ENCODE measurements at regions of chr20 and their contacts with region 1.

Region 1: DNA sequence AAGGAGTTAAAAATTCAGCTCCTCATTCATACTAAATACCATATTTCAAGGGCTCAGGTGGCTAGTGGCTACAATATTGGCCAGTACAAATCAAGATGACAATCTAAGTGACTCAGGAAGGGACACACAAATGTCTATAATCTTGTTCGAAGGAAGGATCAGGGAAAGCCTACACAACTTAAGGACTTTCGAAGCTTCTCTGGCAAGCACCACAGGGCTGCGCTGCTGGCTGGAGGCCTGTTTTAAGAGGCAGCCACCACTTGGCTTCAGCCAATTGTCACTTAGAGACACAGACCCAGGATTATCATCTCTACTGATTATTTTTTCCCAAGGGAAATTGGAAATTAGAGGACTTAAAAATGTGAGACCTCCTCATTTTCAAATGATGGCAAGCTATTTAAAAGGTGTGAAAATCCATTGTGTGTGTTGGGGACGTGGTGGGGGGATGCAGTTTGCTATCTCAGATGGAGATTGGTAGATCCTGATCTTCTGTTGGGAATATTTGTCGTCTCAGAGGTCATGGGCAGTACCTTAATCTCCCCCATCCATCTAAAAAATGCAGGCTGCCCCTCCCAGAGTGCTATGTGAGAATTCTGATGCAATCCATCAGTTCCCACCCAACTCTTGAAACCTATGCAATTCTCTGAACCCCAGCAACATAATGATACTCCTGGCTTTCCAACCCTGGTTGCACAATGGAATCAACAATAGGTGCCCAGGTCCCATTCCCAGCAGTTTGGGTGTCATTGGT is 11.3 kb downstream of the ARHGAP40 start:
- DNase-seq: no peak
- H3K4me3 ChIP-seq: no peak overlapping the region
- H3K4me3 Mint-ChIP-seq: no peak overlapping the region
- H3K27ac Mint-ChIP-seq: no peak overlapping the region
- H3K4me1 ChIP-seq: peaks cover 5% of the 10 kb centered on the region; the same call in 1 of the 2 replicates
- H3K4me1 Mint-ChIP-seq: peaks cover 6% of the 10 kb centered on the region
- H3K27me3 ChIP-seq: no peaks in the 10 kb centered on the region
- H3K27me3 Mint-ChIP-seq: peaks cover 7% of the 10 kb centered on the region
- CTCF ChIP-seq: no peak

Region 2: DNA sequence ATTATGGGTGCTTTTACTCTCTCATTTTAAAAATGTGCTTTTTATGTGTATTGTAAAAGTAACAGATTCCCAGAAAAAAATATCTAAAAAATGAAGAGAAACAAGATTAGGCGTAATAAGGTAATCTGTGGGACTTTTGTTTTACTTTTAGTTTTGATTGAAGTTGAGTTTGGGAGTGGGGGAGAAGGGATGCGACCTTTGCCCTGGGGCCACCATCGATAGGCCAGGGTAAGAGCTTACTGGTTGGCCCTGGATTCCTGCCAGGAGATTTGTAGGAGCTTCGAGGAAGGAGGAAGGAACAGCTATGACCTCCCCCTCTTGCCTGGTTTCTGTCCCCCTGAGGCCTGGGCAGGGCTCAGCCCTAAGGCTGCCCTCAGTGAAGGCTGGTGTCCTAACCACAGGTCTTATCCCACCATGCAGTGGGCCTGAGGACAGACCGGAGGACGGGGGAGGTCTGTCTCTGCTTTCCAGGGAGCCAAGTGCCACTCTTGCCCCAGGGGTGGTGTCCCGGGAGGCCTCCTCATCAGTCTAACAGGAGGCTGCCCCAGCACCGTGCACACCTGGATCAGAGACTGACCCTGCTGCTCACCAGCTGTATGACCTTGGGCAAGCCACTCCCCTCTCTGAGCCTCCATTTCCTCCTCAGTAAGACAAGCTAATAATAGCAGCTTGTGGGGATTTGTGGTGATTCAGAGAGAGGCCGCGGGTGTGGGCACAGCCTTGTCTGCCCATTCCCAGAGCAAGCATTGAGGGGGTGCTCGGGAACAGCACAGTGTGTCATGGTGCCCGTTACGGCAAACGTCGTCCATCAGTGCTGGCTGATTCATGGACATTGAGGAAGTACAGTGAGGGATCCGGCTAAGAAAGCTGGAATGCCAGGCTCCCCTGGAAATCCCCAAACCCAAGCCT is 469.0 kb before region 1 on chr20:
- CTCF ChIA-PET with region 1: no interaction called
- POLR2A ChIA-PET with region 1: no interaction called
- intact Hi-C with region 1: no loop called
- DNase-seq: peak; percentile 89 to 97
- H3K4me3 ChIP-seq: no peak overlapping the region
- H3K4me3 Mint-ChIP-seq: peak overlapping the region; percentile 56
- H3K27ac Mint-ChIP-seq: peak overlapping the region; percentile 96
- H3K4me1 ChIP-seq: peaks cover 66% of the 10 kb centered on the region
- H3K4me1 Mint-ChIP-seq: peaks cover 48% of the 10 kb centered on the region
- H3K27me3 ChIP-seq: no peaks in the 10 kb centered on the region
- H3K27me3 Mint-ChIP-seq: no peaks in the 10 kb centered on the region
- CTCF ChIP-seq: no peak

Region 3: DNA sequence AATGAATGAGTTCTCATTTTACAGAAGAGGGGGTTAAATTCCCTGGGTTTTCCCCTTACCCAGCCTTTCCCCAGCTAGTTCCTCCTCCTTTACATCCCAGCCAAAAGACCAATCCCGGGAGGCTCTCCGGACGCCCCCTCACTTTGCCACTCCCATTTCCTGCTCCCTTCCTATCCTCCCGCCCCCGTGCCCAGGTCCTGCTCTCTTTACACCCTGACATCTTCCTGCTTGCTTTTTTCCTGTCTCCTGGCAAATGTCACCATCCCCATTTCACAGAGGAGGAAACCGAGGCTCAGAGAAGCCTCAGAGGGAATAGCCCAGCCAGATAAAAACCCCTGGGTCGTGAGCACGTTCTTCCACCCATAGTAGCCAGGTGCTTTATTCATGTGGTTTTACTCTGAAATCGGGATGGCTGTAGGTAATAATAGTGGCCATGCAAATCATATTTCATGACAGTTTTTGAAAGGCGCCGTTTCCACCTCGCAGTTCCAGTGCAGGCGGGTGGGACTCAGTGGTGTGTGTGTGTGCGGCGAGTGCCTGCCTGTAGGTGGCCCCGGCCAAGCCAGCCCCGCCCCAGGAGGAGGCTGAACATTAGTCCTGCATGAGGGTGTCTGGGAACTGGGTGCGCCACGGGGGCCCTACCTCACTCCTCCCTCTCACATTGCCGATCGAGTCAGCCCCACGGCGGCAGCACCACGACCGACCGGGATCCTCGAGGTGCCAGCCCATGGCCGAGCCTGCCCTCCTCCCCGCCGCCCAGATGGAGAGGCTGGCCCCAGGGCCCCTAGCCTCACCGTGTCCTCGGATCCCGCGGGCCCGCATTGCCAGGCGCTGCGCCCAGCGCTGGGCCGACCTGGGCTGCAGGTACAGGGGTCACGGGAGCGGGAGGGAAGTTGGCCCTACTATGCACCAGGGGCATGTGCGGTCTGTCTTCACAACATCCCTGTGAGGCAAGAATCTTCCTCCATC is 11.4 kb before region 1 on chr20 and contains the start of gene ARHGAP40:
- CTCF ChIA-PET with region 1: no interaction called
- POLR2A ChIA-PET with region 1: no interaction called
- intact Hi-C with region 1: loop called (anchors 1 kb)
- DNase-seq: peak; percentile 84 to 86
- H3K4me3 ChIP-seq: peak within 1 kb of the TSS; percentile 32
- H3K4me3 Mint-ChIP-seq: peak within 1 kb of the TSS; percentile 54
- H3K27ac Mint-ChIP-seq: no peak within 1 kb of the TSS
- H3K4me1 ChIP-seq: 0 out of 2 replicates have a peak, but pooled peaks cover 8% of the 10 kb centered on the region
- H3K4me1 Mint-ChIP-seq: peaks cover 7% of the 10 kb centered on the region
- H3K27me3 ChIP-seq: no peaks in the 10 kb centered on the region
- H3K27me3 Mint-ChIP-seq: peaks cover 36% of the 10 kb centered on the region
- CTCF ChIP-seq: peak; percentile 61 to 80
- total RNA-seq, gene ARHGAP40: 0.14 TPM in 1 of 2 replicates, not detected in the other

Measured in Caco-2 (cell line).